Activated CD8-positive, alpha-beta T cell treated with anti-CD3 and anti-CD28 coated beads, Interleukin-2, amount 10 ng/mL, durations not matched to agents 7 days and 5 days (primary cell): ENCODE measurements at regions of chr9 and their contacts with region 1.

Region 1: DNA sequence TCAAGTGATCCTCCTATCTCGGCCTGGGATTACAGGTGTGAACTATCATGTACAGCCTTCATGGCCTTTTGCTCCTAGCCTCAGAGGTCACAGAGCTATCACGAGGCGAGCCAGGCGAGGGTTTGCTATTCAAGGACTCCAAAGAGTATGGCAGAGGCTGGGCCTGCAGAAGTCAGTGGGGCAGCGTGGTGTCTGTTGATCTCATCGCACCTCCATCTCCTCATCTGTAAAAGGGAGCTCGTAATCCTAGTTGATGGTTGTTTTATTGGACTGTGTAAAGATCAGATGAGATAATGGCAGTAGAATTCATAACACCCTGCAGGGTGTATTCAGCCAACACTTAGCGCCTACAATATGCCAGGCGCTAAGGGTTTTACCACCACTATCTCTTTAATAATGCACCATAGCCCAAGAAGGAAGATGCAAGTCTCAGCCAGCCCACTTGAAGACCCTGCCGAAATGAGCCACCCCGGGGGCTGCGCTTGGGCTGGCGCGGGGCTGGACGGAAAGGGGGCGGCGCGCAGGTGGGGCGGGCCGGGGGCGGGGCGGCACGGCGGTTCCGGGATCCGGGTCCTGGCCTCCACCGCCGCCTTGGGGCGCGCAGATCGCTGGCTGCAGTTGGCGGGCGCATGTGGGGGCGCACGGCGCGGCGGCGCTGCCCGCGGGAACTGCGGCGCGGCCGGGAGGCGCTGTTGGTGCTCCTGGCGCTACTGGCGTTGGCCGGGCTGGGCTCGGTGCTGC is at the start of gene GALNT12:
- DNase-seq: peak; percentile 64
- ATAC-seq: peak; percentile 83
- H3K4me3 Mint-ChIP-seq: peak within 1 kb of the TSS; percentile 82
- H3K27ac Mint-ChIP-seq: peak within 1 kb of the TSS; percentile 9
- H3K4me1 Mint-ChIP-seq: peaks cover 35% of the 10 kb centered on the region
- H3K27me3 Mint-ChIP-seq: peaks cover 28% of the 10 kb centered on the region
- total RNA-seq, gene GALNT12: 7.9 to 8.8 TPM

Region 2: GRCh38 chr9:98401140-98402018 is 405.9 kb before region 1 on chr9:
- CTCF ChIA-PET with region 1: no interaction called
- POLR2A ChIA-PET with region 1: no interaction called
- DNase-seq: no peak
- ATAC-seq: no peak
- H3K4me3 Mint-ChIP-seq: no peak overlapping the region
- H3K27ac Mint-ChIP-seq: no peak overlapping the region
- H3K4me1 Mint-ChIP-seq: no peaks in the 10 kb centered on the region
- H3K27me3 Mint-ChIP-seq: peaks cover 2% of the 10 kb centered on the region

Region 3: GRCh38 chr9:98763986-98764745 is 43.1 kb before region 1 on chr9:
- CTCF ChIA-PET with region 1: no interaction called
- POLR2A ChIA-PET with region 1: no interaction called
- DNase-seq: no peak
- ATAC-seq: no peak
- H3K4me3 Mint-ChIP-seq: no peak overlapping the region
- H3K27ac Mint-ChIP-seq: no peak overlapping the region
- H3K4me1 Mint-ChIP-seq: no peaks in the 10 kb centered on the region
- H3K27me3 Mint-ChIP-seq: no peaks in the 10 kb centered on the region

Region 4: GRCh38 chr9:98791147-98792095 is 15.8 kb before region 1 on chr9:
- CTCF ChIA-PET with region 1: interaction called, 15 read pairs
- POLR2A ChIA-PET with region 1: interaction called, 8 read pairs
- DNase-seq: peak; percentile 68
- ATAC-seq: peak; percentile 77
- H3K4me3 Mint-ChIP-seq: no peak overlapping the region
- H3K27ac Mint-ChIP-seq: no peak overlapping the region
- H3K4me1 Mint-ChIP-seq: peaks cover 19% of the 10 kb centered on the region
- H3K27me3 Mint-ChIP-seq: no peaks in the 10 kb centered on the region

Region 5: GRCh38 chr9:98796364-98797101 is 10.7 kb before region 1 on chr9 and contains the start of gene ANKS6:
- CTCF ChIA-PET with region 1: interaction called, 15 read pairs
- POLR2A ChIA-PET with region 1: interaction called, 8 read pairs
- DNase-seq: peak; percentile 83
- ATAC-seq: peak; percentile 90
- H3K4me3 Mint-ChIP-seq: peak within 1 kb of the TSS; percentile 79
- H3K27ac Mint-ChIP-seq: peak within 1 kb of the TSS; percentile 48
- H3K4me1 Mint-ChIP-seq: peaks cover 16% of the 10 kb centered on the region
- H3K27me3 Mint-ChIP-seq: peaks cover 8% of the 10 kb centered on the region
- total RNA-seq, gene ANKS6: 3.8 to 5.8 TPM